ENCODE measurements at regions of chr17 and their contacts with region 1.

Region 1: DNA sequence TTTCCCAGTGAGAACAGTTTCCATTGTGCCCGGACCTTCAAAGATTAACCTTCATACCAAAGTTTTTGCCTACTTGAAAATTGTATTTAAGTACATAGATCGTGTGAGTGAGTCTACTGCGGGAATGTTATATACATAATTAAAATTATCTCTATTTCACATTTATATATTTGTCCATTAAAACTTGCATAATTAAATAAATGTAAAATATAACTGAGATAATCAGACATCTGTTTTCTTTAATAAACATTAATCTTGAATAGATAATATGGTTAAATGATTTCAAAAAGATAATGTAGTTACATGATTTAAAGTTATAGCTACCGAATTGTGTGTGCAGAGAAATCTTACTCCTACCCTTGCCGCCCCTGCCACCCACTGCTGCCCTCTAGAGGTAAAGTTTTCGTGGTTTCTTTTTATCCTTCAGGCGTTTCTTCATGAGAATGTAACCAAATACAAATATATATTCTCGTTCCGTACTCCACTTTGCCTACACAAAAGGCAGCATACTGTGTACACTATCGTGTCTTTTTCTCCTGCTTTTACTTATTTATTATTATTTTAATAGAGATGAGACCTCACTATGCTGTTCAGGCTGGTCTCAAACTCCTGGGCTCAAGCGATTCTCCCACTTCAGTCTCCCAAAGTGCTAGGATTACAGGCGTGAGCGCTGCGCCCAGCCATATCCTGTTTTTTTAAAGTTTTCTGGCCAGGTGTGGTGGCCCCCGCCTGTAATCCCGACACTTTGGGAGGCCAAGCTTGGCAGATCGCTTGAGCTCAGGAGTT is 35.6 kb downstream of the RPA1 start:
- DNase-seq: peak; percentile 62
- H3K4me3 Mint-ChIP-seq: no peak overlapping the region
- H3K27ac Mint-ChIP-seq: no peak overlapping the region
- H3K4me1 Mint-ChIP-seq: no peaks in the 10 kb centered on the region
- H3K27me3 Mint-ChIP-seq: no peaks in the 10 kb centered on the region
- CTCF ChIP-seq: peak; percentile 34

Region 2: GRCh38 chr17:1684378-1685189 is 180.9 kb before region 1 on chr17 and contains the start of gene PRPF8:
- CTCF ChIA-PET with region 1: interaction called, 12 read pairs
- intact Hi-C with region 1: no loop called
- DNase-seq: peak; percentile 94
- H3K4me3 Mint-ChIP-seq: peak within 1 kb of the TSS; percentile 92
- H3K27ac Mint-ChIP-seq: peak within 1 kb of the TSS; percentile 87
- H3K4me1 Mint-ChIP-seq: peaks cover 19% of the 10 kb centered on the region
- H3K27me3 Mint-ChIP-seq: no peaks in the 10 kb centered on the region
- CTCF ChIP-seq: no peak
- total RNA-seq, gene PRPF8: 182 and 206 TPM in 2 replicates

Region 3: GRCh38 chr17:1882836-1883235 is 17.4 kb after region 1 on chr17:
- CTCF ChIA-PET with region 1: no interaction called
- intact Hi-C with region 1: no loop called
- DNase-seq: peak; percentile 15
- H3K4me3 Mint-ChIP-seq: no peak overlapping the region
- H3K27ac Mint-ChIP-seq: no peak overlapping the region
- H3K4me1 Mint-ChIP-seq: no peaks in the 10 kb centered on the region
- H3K27me3 Mint-ChIP-seq: no peaks in the 10 kb centered on the region
- CTCF ChIP-seq: peak; percentile 40